ENCODE measurements at regions of chr9 and their contacts with region 1.

Region 1: GRCh38 chr9:131478421-131478868 is 24.3 kb upstream of the POMT1 start:
- DNase-seq: peak; percentile 35 to 70 (median 42)
- H3K4me3 ChIP-seq: no peak overlapping the region
- H3K4me3 Mint-ChIP-seq: no peak overlapping the region
- H3K27ac ChIP-seq: no peak overlapping the region
- H3K27ac Mint-ChIP-seq: peak overlapping the region in 7 of 8 donors; percentile 22 to 95 (median 73)
- H3K4me1 ChIP-seq: no peaks in the 10 kb centered on the region
- H3K4me1 Mint-ChIP-seq: peaks cover 0 to 6% (median 4%) of the 10 kb centered on the region in 3 donors
- H3K27me3 ChIP-seq: no peaks in the 10 kb centered on the region
- H3K27me3 Mint-ChIP-seq: peaks cover 0 to 2% of the 10 kb centered on the region in 2 donors

Region 2: GRCh38 chr9:131500939-131501541 is 22.6 kb after region 1 on chr9:
- CTCF ChIA-PET with region 1: interaction called, 11 read pairs
- POLR2A ChIA-PET with region 1: interaction called, 3 read pairs
- DNase-seq: peak; percentile 28 to 81 (median 36)
- H3K4me3 ChIP-seq: peak overlapping the region; percentile 42
- H3K4me3 Mint-ChIP-seq: peak overlapping the region; percentile 85 to 96 (median 95)
- H3K27ac ChIP-seq: peak overlapping the region; percentile 32
- H3K27ac Mint-ChIP-seq: peak overlapping the region; percentile 86 to 96 (median 95)
- H3K4me1 ChIP-seq: peaks cover 52% of the 10 kb centered on the region
- H3K4me1 Mint-ChIP-seq: peaks cover 48 to 82% (median 69%) of the 10 kb centered on the region in 3 donors
- H3K27me3 ChIP-seq: no peaks in the 10 kb centered on the region
- H3K27me3 Mint-ChIP-seq: peaks cover 0 to 2% of the 10 kb centered on the region in 2 donors

Region 3: DNA sequence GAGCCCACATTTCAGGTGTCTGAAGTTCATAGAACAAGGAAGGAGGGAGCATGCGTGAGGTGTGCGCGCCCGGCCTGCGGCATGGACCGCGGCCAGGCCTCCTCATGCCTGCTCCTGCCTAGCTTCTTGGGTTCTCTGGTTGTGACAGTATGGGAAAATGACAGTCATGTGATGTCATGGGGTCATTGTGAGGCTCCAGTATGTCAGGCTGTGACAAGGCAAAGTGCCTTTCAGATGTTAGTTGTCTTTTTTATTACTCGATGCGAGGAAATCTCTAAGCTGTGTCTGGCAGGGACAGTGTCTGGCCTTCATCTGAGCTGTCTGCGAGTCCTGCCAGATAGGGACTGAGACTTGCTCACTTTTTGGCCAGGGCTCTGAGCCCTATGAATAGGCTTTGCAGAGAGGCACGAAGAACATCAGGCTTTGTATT is 39.3 kb after region 1 on chr9:
- CTCF ChIA-PET with region 1: no interaction called
- POLR2A ChIA-PET with region 1: no interaction called
- DNase-seq: no peak
- H3K4me3 ChIP-seq: no peak overlapping the region
- H3K4me3 Mint-ChIP-seq: no peak overlapping the region
- H3K27ac ChIP-seq: no peak overlapping the region
- H3K27ac Mint-ChIP-seq: peak overlapping the region in 3 of 8 donors; percentile 21 to 66 (median 35)
- H3K4me1 ChIP-seq: no peaks in the 10 kb centered on the region
- H3K4me1 Mint-ChIP-seq: no peaks in the 10 kb centered on the region
- H3K27me3 ChIP-seq: no peaks in the 10 kb centered on the region
- H3K27me3 Mint-ChIP-seq: no peaks in the 10 kb centered on the region